ENCODE measurements at regions of chr4 and their contacts with region 1.

Region 1: DNA sequence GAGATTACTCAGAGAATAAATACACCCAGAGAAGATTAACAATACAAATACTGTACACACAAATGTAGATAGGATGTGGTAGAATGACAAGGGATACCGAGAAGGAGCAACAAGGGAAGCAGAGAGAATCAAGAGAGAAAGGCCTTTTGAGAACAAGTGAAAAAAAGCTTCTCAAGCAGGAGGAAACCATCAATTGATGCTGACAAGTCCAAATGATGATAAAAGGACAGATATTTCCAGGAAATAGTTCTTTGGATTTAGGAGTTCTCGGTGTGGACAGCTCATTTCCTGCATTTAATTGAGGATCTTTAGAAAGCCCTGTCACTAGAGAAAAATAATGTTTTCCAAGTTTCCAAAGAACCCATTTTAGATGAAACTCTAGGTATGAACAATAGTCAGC is 48.1 kb downstream of the NPY5R start:
- DNase-seq: no peak
- ATAC-seq: no peak
- H3K4me3 ChIP-seq: no peak overlapping the region
- H3K27ac ChIP-seq: peak overlapping the region in 3 of 12 donors; percentile 16 to 41 (median 23)
- H3K4me1 ChIP-seq: peaks cover 0 to 6% (median 0%) of the 10 kb centered on the region in 12 donors
- H3K27me3 ChIP-seq: no peaks in the 10 kb centered on the region
- CTCF ChIP-seq: no peak
- POLR2A ChIP-seq: no peak

Region 2: GRCh38 chr4:163344147-163345125 is 47.3 kb before region 1 on chr4:
- intact Hi-C with region 1: loop called in 1 of 10 experiments (anchors 5 kb)
- DNase-seq: peak in 2 of 5 donors; percentile 22 to 52
- ATAC-seq: peak in 3 of 4 donors; percentile 20 to 58 (median 34)
- H3K4me3 ChIP-seq: peak overlapping the region; percentile 26 to 64 (median 48)
- H3K27ac ChIP-seq: peak overlapping the region in 5 of 12 donors; percentile 25 to 51 (median 46)
- H3K4me1 ChIP-seq: peaks cover 0 to 12% (median 1%) of the 10 kb centered on the region in 12 donors
- H3K27me3 ChIP-seq: peaks cover 3 to 70% (median 24%) of the 10 kb centered on the region in 9 donors
- CTCF ChIP-seq: no peak
- POLR2A ChIP-seq: no peak